Activated T-helper 2 cell treated with anti-CD3 and anti-CD28 coated beads, Interferon-gamma antibody, Interleukin-2, Interleukin-4, amounts not matched to agents 10 μg/mL and 5 μg/mL and 100 μg/mL, durations not matched to agents 14 hours and 24 hours and 36 hours (primary cell): ENCODE measurements at regions of chr3 and their contacts with region 1.

Region 1: GRCh38 chr3:19931180-19931692 is 2.8 kb downstream of the EFHB start:
- DNase-seq: no peak
- H3K4me3 Mint-ChIP-seq: peak overlapping the region; percentile 35
- H3K27ac Mint-ChIP-seq: peak overlapping the region; percentile 88
- H3K4me1 Mint-ChIP-seq: peaks cover 36% of the 10 kb centered on the region
- H3K27me3 Mint-ChIP-seq: peaks cover 17% of the 10 kb centered on the region

Region 2: GRCh38 chr3:18717598-18717997 is 1213.6 kb before region 1 on chr3:
- intact Hi-C with region 1: loop called (anchors 10 kb)
- DNase-seq: no peak
- H3K4me3 Mint-ChIP-seq: peak overlapping the region; percentile 59
- H3K27ac Mint-ChIP-seq: peak overlapping the region; percentile 98
- H3K4me1 Mint-ChIP-seq: peaks cover 67% of the 10 kb centered on the region
- H3K27me3 Mint-ChIP-seq: no peaks in the 10 kb centered on the region

Region 3: DNA sequence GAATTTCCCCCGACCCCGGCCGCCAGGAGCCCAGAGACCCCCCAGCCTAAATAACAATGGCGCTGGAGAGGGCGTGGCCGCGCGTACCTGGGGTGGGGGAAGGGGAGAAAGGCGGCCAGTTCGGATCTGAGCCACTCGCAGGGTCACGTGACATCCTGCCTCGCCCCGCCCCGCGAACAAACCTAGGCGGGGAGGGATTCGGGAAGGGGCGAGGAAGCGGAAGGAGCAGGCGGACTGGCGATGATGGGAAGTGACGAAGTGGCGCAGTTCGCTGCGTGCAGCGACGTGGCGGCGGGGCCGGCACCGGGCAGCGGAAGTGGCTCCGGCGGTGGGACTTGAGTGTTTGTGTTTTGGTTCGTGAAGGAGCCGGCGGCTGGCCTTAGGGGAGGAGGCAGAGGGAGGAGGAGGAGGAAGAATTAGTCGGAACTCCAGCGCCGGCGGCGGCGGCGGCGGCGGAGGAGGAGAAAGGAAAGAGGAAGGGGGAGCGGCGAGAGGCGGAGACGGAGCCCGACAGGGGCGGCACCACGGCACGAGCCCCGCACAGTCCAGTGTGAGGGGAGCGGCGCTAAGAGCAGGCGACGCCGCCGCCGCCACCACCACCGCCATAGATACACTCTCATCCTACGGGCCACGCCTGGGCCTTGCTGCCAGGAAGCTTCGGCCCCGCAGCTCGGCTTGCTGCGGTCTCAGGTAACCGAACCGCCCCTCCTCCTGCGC is 15.8 kb after region 1 on chr3 and contains the start of gene RAB5A:
- intact Hi-C with region 1: loop called (anchors 1 kb)
- DNase-seq: peak; percentile 97
- H3K4me3 Mint-ChIP-seq: peak within 1 kb of the TSS; percentile 98
- H3K27ac Mint-ChIP-seq: peak within 1 kb of the TSS; percentile 98
- H3K4me1 Mint-ChIP-seq: peaks cover 29% of the 10 kb centered on the region
- H3K27me3 Mint-ChIP-seq: peaks cover 2% of the 10 kb centered on the region
- total RNA-seq, gene RAB5A: 43.5 and 49.5 TPM in 2 replicates

Region 4: GRCh38 chr3:20054549-20054987 is 123.3 kb after region 1 on chr3:
- intact Hi-C with region 1: loop called (anchors 1 kb)
- DNase-seq: peak; percentile 39
- H3K4me3 Mint-ChIP-seq: no peak overlapping the region
- H3K27ac Mint-ChIP-seq: no peak overlapping the region
- H3K4me1 Mint-ChIP-seq: peaks cover 25% of the 10 kb centered on the region
- H3K27me3 Mint-ChIP-seq: no peaks in the 10 kb centered on the region

Region 5: DNA sequence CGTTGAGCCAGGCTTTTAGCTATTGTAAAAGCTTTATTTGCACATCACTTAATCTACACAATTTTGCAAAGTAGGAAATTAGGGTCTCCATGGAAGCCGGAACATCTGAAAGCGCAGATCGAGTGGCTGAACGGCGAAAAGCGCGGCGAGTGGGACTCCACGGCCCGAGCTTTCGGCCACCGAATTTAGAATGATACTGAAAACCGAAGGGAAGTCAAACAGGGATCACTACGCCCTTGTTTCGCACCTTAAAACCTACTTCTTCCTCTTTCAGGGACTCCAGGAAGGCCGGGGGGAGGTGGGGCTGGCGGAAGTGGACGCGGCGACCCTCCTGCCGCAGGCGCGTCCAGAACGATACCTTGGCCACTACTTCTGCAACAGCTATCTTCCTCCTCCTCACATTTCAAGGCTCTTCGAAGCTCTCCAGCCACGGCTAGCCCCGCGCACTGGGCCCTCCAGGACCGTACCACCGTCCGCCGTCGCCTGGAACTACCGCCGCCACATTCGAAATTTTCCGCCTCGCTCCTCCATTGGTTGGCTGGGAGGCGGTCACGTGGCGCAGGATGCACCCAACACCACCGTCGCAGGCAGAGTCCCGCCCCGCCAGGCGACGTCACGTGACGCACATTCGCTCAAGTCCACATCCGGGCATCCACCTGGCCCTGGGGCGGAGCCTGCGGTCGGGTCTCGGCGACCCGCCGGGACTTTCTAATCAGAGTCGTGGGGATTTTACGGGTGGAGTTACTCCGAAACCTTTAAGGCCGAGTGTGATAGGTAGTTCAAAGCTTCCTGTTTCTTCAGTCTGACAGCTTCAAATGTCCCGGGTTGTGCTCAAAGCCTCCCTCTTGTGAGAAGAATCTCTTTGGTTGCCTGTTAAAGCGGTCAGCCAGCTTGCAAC is 254.7 kb after region 1 on chr3 and contains the start of gene SGO1:
- intact Hi-C with region 1: loop called (anchors 1 kb)
- DNase-seq: peak; percentile 99
- H3K4me3 Mint-ChIP-seq: no peak within 1 kb of the TSS
- H3K27ac Mint-ChIP-seq: no peak within 1 kb of the TSS
- H3K4me1 Mint-ChIP-seq: peaks cover 7% of the 10 kb centered on the region
- H3K27me3 Mint-ChIP-seq: peaks cover 4% of the 10 kb centered on the region
- total RNA-seq, gene SGO1: 19.2 and 20.8 TPM in 2 replicates